ENCODE measurements at regions of chr3 and their contacts with region 1.

Region 1: DNA sequence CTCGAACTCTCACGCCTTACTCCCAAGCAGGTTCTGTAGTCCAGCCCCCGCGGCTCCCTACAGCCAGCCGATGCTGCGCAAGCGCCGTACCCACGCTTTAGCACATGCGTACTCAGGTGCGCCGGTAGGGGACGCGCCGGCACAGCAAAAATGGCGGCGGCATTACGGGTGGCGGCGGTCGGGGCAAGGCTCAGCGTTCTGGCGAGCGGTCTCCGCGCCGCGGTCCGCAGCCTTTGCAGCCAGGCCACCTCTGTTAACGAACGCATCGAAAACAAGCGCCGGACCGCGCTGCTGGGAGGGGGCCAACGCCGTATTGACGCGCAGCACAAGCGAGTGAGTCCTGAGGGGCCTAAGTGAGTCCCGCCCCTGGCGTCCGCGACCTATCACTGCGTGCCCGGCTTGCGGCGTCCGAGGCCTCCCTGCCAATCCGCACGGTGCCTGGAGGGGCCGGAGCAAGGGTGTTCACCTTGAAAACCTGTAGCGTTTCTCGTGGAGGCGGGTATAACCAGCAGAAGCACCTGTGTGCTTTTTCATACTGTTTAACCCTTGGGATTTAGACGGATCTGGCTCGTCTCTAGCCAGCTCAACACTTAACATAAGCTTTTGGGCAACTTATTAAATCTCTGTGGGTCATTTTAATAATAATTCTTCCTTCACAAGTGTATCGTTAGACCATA is at the start of gene PCCB:
- DNase-seq: peak; percentile 97
- ATAC-seq: peak; percentile 99
- total RNA-seq, gene PCCB: 100 TPM

Region 2: DNA sequence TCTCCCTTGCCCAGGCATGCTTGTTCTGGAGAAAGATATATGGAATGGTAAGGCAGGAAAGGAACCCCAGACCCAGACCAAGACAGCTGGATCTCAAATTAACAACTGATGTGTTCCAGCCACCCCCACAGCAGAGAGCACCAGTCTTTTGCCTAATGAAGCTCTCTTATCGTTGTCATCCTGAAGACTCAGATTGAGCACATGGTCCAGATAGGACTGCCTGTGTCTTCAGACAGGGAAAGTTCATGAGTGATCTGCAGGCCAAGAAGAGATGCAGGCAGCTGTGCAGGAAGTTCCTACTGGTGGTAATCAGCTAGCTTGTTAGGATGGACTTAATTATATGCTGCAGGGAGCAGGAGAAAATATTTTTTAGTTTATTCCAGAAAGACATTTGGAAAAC is 231.5 kb before region 1 on chr3:
- intact Hi-C with region 1: no loop called
- DNase-seq: no peak
- ATAC-seq: peak; percentile 32

Region 3: DNA sequence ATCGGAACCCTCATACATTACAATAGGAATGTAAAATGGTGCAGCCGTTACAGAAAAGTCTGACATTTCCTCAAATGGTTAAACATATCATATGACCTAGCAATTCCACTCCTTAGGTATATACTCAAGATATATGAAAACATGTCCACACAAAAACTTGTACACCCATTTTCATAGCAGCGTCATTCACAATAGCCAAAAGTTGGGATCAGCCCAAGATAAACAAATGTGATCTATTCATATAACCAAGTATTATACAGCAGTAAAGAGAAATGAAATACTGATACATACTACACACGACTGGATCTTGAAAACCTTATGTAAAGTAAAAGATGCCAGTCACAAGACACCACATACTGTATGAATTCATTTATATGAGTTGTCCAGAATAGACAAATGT is 156.6 kb before region 1 on chr3:
- intact Hi-C with region 1: loop called (anchors 10 kb)
- DNase-seq: no peak
- ATAC-seq: no peak

Region 4: GRCh38 chr3:136209921-136210320 is 40.4 kb before region 1 on chr3:
- intact Hi-C with region 1: loop called (anchors 10 kb)
- DNase-seq: no peak
- ATAC-seq: no peak

Measured in left ventricle myocardium superior (tissue), 1 donor.